HEK293T (cell line): ENCODE measurements at regions of chr18 and their contacts with region 1.

Region 1: DNA sequence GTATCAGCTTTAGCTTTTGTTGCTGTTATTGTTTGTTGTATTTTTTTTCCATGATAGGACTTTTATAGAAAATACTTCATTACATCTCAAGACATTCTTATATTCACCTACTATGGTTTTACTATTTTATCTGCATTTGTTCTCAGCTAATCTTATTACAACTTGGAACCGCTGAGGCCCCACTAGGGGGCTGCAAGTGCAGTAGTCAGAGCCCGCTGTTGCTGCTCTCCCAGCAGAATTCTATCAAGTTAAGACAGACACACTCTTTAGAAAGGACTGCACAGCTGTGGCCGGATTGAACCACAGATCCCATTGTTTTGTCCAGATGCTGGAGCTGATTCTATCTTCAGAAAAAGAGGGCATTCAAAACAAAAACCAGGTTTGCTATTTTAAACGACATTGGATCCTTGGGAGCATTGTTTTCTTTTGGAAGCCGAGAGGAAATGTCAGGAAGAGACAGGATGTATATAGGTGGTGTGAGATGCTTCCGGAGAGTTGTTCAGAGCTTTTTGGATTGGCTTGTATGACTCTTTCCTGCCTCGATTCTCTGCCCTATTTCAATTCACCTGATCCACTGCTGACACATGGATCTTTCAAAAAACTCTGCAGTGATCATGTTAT is 105.7 kb upstream of the GAREM1 start:
- DNase-seq: peak; percentile 78

Region 2: DNA sequence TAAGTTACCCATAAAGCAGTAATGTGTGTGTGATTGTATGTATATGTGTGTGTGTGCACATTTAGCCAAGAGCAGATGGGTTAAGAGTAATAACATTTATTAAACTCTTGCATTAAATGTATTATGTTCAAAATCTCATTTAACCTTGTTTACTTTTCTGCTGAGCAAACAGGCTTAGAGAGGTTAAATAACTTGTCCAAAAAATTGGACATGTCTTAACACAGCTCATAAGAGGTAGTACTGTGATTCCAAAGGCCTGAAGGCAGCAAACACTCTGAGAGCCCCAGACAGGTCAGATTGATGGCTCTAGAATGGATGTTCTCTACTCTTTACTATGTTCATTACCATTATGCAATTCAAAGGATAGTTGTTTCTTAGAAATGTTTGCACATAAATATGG is 15.9 kb after region 1 on chr18:
- CTCF ChIA-PET with region 1: interaction called, 16 read pairs
- POLR2A ChIA-PET with region 1: no interaction called
- DNase-seq: no peak